Endothelial cell of umbilical vein (primary cell): ENCODE measurements at regions of chr2 and their contacts with region 1.

Region 1: GRCh38 chr2:234690569-234691213 is 193.8 kb upstream of the ARL4C start:
- DNase-seq: peak; percentile 97
- H3K4me3 ChIP-seq: no peak overlapping the region
- H3K27ac ChIP-seq: peak overlapping the region; percentile 75
- H3K4me1 ChIP-seq: peaks cover 40% of the 10 kb centered on the region
- H3K27me3 ChIP-seq: no peaks in the 10 kb centered on the region
- CTCF ChIP-seq: no peak
- POLR2A ChIP-seq: no peak

Region 2: GRCh38 chr2:234620018-234620417 is 70.7 kb before region 1 on chr2:
- CTCF ChIA-PET with region 1: interaction called, 5 read pairs
- POLR2A ChIA-PET with region 1: interaction called, 4 read pairs
- dilution Hi-C with region 1: no loop called
- intact Hi-C with region 1: loop called (anchors 1 kb)
- DNase-seq: peak; percentile 84
- H3K4me3 ChIP-seq: no peak overlapping the region
- H3K27ac ChIP-seq: no peak overlapping the region
- H3K4me1 ChIP-seq: peaks cover 20% of the 10 kb centered on the region
- H3K27me3 ChIP-seq: peaks cover 34 to 41% of the 10 kb centered on the region in 2 experiments
- CTCF ChIP-seq: no peak
- POLR2A ChIP-seq: peak; percentile 73

Region 3: DNA sequence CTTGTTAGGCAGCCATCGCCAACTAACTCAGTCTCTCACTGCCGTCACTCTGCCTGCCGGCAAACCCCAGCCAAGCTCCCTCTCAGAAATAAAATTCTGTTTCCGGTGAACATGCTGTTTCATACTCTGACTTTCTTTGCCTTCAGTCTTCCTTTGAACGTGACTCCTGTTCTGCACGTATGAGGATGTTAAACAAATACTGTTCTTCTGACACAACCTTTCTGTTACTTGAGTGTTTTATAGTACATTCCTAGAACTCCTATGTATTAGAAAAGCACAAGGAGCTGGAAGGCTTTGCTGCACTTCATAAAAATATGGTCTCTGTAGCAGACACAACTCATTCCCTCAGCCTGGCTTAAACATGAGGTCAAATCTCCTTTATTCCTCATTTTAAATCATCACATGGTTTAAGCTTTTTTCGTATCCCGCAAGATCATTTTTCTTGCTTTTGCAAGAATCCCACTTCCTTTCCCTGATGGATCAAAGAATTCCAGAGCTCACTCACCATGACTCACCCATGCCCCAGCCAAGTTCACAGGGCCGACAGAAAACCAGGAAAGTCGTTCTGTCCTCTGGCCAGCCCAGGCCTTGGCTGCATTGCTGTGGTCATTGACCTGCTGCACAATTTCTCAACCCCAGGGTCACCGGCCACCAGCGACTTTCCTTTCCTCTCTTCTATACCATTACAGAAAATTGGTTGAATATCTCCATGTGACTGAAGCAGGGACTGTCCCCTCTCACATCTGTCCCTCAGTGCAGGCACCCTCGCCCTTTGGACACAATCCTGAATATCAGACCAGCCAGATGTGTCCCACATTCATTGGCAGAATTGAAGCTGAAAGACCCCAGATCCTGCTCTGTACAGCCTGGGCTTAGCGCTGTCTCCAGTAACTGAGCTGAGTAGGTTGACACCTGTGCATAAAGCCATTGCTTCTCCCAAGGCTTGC is 10.7 kb before region 1 on chr2:
- CTCF ChIA-PET with region 1: interaction called, 10 read pairs
- POLR2A ChIA-PET with region 1: interaction called, 9 read pairs
- dilution Hi-C with region 1: no loop called
- intact Hi-C with region 1: loop called (anchors 1 kb)
- DNase-seq: peak; percentile 93
- H3K4me3 ChIP-seq: no peak overlapping the region
- H3K27ac ChIP-seq: peak overlapping the region; percentile 69
- H3K4me1 ChIP-seq: peaks cover 20% of the 10 kb centered on the region
- H3K27me3 ChIP-seq: no peaks in the 10 kb centered on the region
- CTCF ChIP-seq: no peak
- POLR2A ChIP-seq: no peak

Region 4: GRCh38 chr2:234823877-234824376 is 133.2 kb after region 1 on chr2:
- CTCF ChIA-PET with region 1: interaction called, 3 read pairs
- POLR2A ChIA-PET with region 1: no interaction called
- dilution Hi-C with region 1: no loop called
- intact Hi-C with region 1: loop called (anchors 1 kb)
- DNase-seq: peak; percentile 98
- H3K4me3 ChIP-seq: no peak overlapping the region
- H3K27ac ChIP-seq: peak overlapping the region; percentile 90
- H3K4me1 ChIP-seq: peaks cover 24% of the 10 kb centered on the region
- H3K27me3 ChIP-seq: no peaks in the 10 kb centered on the region
- CTCF ChIP-seq: no peak
- POLR2A ChIP-seq: peak; percentile 69

Region 5: GRCh38 chr2:234840336-234840735 is 149.6 kb after region 1 on chr2:
- CTCF ChIA-PET with region 1: no interaction called
- POLR2A ChIA-PET with region 1: no interaction called
- dilution Hi-C with region 1: no loop called
- intact Hi-C with region 1: loop called (anchors 2 kb)
- DNase-seq: peak; percentile 95
- H3K4me3 ChIP-seq: no peak overlapping the region
- H3K27ac ChIP-seq: peak overlapping the region; percentile 62
- H3K4me1 ChIP-seq: peaks cover 19% of the 10 kb centered on the region
- H3K27me3 ChIP-seq: no peaks in the 10 kb centered on the region
- CTCF ChIP-seq: no peak
- POLR2A ChIP-seq: no peak

Region 6: GRCh38 chr2:234853729-234854128 is 163.0 kb after region 1 on chr2:
- CTCF ChIA-PET with region 1: no interaction called
- POLR2A ChIA-PET with region 1: no interaction called
- dilution Hi-C with region 1: no loop called
- intact Hi-C with region 1: no loop called
- DNase-seq: no peak
- H3K4me3 ChIP-seq: no peak overlapping the region
- H3K27ac ChIP-seq: no peak overlapping the region
- H3K4me1 ChIP-seq: no peaks in the 10 kb centered on the region
- H3K27me3 ChIP-seq: no peaks in the 10 kb centered on the region
- CTCF ChIP-seq: no peak
- POLR2A ChIP-seq: no peak

Region 7: GRCh38 chr2:235050992-235051351 is 360.3 kb after region 1 on chr2:
- CTCF ChIA-PET with region 1: no interaction called
- POLR2A ChIA-PET with region 1: no interaction called
- dilution Hi-C with region 1: no loop called
- intact Hi-C with region 1: loop called (anchors 5 kb)
- DNase-seq: peak; percentile 88
- H3K4me3 ChIP-seq: no peak overlapping the region
- H3K27ac ChIP-seq: peak overlapping the region; percentile 69
- H3K4me1 ChIP-seq: peaks cover 28% of the 10 kb centered on the region
- H3K27me3 ChIP-seq: no peaks in the 10 kb centered on the region
- CTCF ChIP-seq: peak in 1 of 2 donors; percentile 10
- POLR2A ChIP-seq: no peak